ENCODE measurements at regions of chr1 and their contacts with region 1.

Region 1: GRCh38 chr1:153277817-153278216 is 18.3 kb downstream of the LORICRIN start:
- DNase-seq: peak in 10 of 14 experiments; percentile 12 to 64 (median 30)
- ATAC-seq: peak; percentile 72
- H3K4me3 ChIP-seq: no peak overlapping the region
- H3K4me3 Mint-ChIP-seq: no peak overlapping the region
- H3K27ac ChIP-seq: no peak overlapping the region
- H3K27ac Mint-ChIP-seq: no peak overlapping the region
- H3K4me1 ChIP-seq: no peaks in the 10 kb centered on the region
- H3K4me1 Mint-ChIP-seq: no peaks in the 10 kb centered on the region
- H3K27me3 ChIP-seq: peaks cover 4 to 15% of the 10 kb centered on the region in 2 experiments
- H3K27me3 Mint-ChIP-seq: peaks cover 61% of the 10 kb centered on the region
- CTCF ChIP-seq: peak; percentile 67

Region 2: DNA sequence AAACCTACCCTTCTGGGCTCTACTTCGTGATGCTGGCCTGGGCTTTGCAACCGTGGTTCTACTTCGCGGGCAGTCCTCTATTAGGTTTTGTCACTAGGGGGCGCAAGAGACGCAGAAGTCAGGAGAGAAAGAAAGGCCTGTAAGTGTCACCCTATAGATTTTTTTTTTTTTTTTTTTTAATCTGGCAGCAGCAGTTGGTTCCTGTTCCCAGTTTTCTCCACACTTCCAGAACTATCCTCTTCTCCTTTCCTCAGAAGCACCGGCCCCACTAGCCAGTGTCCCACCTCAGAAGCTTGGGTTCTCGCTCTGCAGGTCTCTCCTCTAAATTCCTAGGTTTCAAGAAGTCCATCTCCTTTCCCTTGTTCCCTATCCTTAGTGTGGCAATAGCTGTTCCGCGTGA is 623.7 kb before region 1 on chr1:
- CTCF ChIA-PET with region 1: no interaction called
- POLR2A ChIA-PET with region 1: no interaction called
- intact Hi-C with region 1: loop called (anchors 5 kb)
- DNase-seq: peak in 10 of 14 experiments; percentile 6 to 63 (median 22)
- ATAC-seq: no peak
- H3K4me3 ChIP-seq: no peak overlapping the region
- H3K4me3 Mint-ChIP-seq: no peak overlapping the region
- H3K27ac ChIP-seq: no peak overlapping the region
- H3K27ac Mint-ChIP-seq: no peak overlapping the region
- H3K4me1 ChIP-seq: no peaks in the 10 kb centered on the region
- H3K4me1 Mint-ChIP-seq: no peaks in the 10 kb centered on the region
- H3K27me3 ChIP-seq: peaks cover 7 to 11% of the 10 kb centered on the region in 2 experiments
- H3K27me3 Mint-ChIP-seq: peaks cover 28% of the 10 kb centered on the region
- CTCF ChIP-seq: peak; percentile 52

Measured in CD4-positive, alpha-beta T cell (primary cell).